Adrenal gland (tissue), 19 donors: ENCODE measurements at regions of chr4 and their contacts with region 1.

Region 1: GRCh38 chr4:143207557-143207956 is 22.8 kb downstream of the USP38 start:
- DNase-seq: no peak
- H3K4me3 ChIP-seq: no peak overlapping the region
- H3K27ac ChIP-seq: no peak overlapping the region
- H3K4me1 ChIP-seq: peaks cover 0 to 5% of the 10 kb centered on the region in 2 donors
- H3K27me3 ChIP-seq: no peaks in the 10 kb centered on the region
- CTCF ChIP-seq: peak; percentile 18 to 62 (median 46)
- POLR2A ChIP-seq: no peak

Region 2: DNA sequence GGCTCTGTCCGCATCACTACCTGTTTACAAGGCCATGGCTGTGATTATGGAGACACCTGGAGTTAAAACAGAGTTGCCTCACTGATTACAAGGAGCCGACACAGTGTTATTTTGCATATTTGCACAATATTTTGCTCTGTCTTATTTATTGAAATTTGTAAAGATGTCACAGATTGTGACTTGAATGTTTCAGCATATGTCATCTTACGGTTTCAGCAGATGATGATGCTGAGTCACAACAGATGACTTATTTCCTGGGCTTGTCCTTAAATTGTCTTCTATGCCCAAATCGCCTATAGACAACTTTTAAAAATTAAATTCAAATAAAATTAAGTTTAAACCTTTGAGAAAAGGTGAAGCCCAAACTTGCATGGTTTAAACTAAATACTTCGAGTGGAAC is 274.4 kb before region 1 on chr4:
- intact Hi-C with region 1: no loop called
- DNase-seq: no peak
- H3K4me3 ChIP-seq: no peak overlapping the region
- H3K27ac ChIP-seq: no peak overlapping the region
- H3K4me1 ChIP-seq: no peaks in the 10 kb centered on the region
- H3K27me3 ChIP-seq: no peaks in the 10 kb centered on the region
- CTCF ChIP-seq: no peak
- POLR2A ChIP-seq: no peak

Region 3: DNA sequence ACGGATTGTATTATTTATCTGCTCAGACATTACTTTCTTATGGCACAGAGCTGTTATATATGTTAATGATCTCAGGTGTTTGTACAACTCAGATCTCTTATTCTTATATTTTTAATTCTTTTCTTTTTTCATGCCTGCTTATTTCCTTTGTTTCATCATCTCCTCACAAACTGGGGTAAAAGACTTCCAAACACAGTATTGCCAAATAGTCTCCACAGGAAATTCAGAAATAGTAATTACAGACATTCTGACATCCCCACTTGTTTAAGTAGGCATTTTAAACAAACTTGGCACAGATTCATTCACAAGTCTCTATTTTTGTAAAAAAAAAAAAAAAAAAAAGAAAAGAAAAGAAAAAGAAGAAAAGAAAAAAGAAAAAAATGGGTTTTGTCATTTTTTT is 152.6 kb before region 1 on chr4:
- intact Hi-C with region 1: no loop called
- DNase-seq: no peak
- H3K4me3 ChIP-seq: no peak overlapping the region
- H3K27ac ChIP-seq: no peak overlapping the region
- H3K4me1 ChIP-seq: no peaks in the 10 kb centered on the region
- H3K27me3 ChIP-seq: no peaks in the 10 kb centered on the region
- CTCF ChIP-seq: no peak
- POLR2A ChIP-seq: no peak

Region 4: GRCh38 chr4:143482840-143483239 is 275.3 kb after region 1 on chr4:
- intact Hi-C with region 1: loop called in 1 of 2 experiments (anchors 5 kb)
- DNase-seq: peak; percentile 14 to 62 (median 31)
- H3K4me3 ChIP-seq: no peak overlapping the region
- H3K27ac ChIP-seq: no peak overlapping the region
- H3K4me1 ChIP-seq: no peaks in the 10 kb centered on the region
- H3K27me3 ChIP-seq: no peaks in the 10 kb centered on the region
- CTCF ChIP-seq: peak; percentile 31 to 84 (median 69)
- POLR2A ChIP-seq: no peak